Colonic mucosa (tissue), 4 donors: ENCODE measurements at regions of chr5 and their contacts with region 1.

Region 1: GRCh38 chr5:132064738-132065331 is 4.4 kb downstream of the IL3 start:
- DNase-seq: peak; percentile 81
- H3K4me3 ChIP-seq: no peak overlapping the region
- H3K27ac ChIP-seq: no peak overlapping the region
- H3K4me1 ChIP-seq: no peaks in the 10 kb centered on the region
- H3K27me3 ChIP-seq: no peaks in the 10 kb centered on the region
- CTCF ChIP-seq: peak; percentile 93

Region 2: GRCh38 chr5:131810510-131811249 is 254.2 kb before region 1 on chr5:
- intact Hi-C with region 1: loop called (anchors 5 kb)
- DNase-seq: no peak
- H3K4me3 ChIP-seq: no peak overlapping the region
- H3K27ac ChIP-seq: no peak overlapping the region
- H3K4me1 ChIP-seq: no peaks in the 10 kb centered on the region
- H3K27me3 ChIP-seq: no peaks in the 10 kb centered on the region
- CTCF ChIP-seq: no peak